ENCODE measurements at regions of chr3 and their contacts with region 1.

Region 1: GRCh38 chr3:43998836-43999727 is 242.6 kb upstream of the TOPAZ1 start:
- DNase-seq: peak; percentile 89 to 90
- H3K4me3 ChIP-seq: peak overlapping the region; percentile 60 to 75 (median 66)
- H3K27ac ChIP-seq: peak overlapping the region; percentile 73 to 78 (median 77)
- H3K4me1 ChIP-seq: peaks cover 27 to 55% of the 10 kb centered on the region in 2 donors
- H3K27me3 ChIP-seq: no peaks in the 10 kb centered on the region
- CTCF ChIP-seq: peak in 1 of 6 experiments; percentile 21
- POLR2A ChIP-seq: peak; percentile 14 to 95

Region 2: DNA sequence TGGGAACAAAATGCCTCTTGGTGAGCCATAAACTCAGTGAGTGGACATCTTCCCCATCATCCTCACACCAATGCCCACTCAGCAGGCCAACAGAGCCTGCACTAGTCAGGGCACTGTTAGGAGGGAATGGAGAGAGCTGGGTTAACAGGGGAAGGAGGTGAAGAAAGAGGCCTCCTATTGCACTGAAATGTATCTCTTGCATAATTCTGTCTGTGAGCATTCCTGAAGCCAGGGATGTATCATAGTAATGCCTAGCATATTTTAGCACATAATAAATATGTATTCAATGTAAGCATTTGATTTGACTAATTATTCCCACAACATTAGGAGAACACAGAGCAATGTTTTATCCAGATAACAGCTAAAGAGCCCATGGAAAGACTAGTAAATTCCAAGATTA is 458.5 kb before region 1 on chr3:
- intact Hi-C with region 1: loop called (anchors 10 kb)
- DNase-seq: no peak
- H3K4me3 ChIP-seq: no peak overlapping the region
- H3K27ac ChIP-seq: no peak overlapping the region
- H3K4me1 ChIP-seq: no peaks in the 10 kb centered on the region
- H3K27me3 ChIP-seq: no peaks in the 10 kb centered on the region
- CTCF ChIP-seq: no peak
- POLR2A ChIP-seq: no peak

Region 3: DNA sequence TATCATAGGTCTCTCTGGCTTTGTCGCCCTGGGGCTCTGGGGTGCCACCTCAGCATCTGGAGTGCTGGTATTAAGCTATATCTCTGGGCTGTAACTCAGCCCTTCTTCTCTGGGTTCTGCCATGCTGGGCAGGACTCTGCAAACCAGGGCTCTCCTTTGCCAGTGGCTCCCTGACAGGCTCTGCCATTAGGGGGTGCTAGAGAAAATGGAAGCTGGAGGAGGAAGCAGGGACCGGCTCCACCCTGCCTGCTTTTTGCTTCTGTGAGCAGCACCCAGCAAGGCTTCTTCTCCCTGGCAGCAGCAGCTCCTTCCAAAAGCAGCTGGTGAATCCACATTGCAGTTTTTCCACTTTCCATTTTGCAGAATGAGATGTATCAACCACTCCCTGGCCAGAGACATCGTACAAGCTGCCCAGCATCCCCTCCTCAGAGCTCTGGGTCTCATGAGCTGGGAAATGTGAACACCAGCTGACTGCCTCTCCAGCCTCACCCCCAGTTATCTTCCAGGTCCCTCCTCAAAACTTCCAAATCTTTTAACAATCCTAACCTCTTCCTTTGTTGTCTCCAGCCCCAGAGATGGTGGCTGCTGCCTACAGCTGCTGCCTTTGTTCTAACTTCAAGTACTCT is 143.3 kb before region 1 on chr3:
- intact Hi-C with region 1: loop called (anchors 10 kb)
- DNase-seq: peak; percentile 64 to 74
- H3K4me3 ChIP-seq: no peak overlapping the region
- H3K27ac ChIP-seq: no peak overlapping the region
- H3K4me1 ChIP-seq: peaks cover 0 to 6% of the 10 kb centered on the region in 2 donors
- H3K27me3 ChIP-seq: no peaks in the 10 kb centered on the region
- CTCF ChIP-seq: peak in 5 of 6 experiments; percentile 27 to 68 (median 50)
- POLR2A ChIP-seq: no peak

Region 4: DNA sequence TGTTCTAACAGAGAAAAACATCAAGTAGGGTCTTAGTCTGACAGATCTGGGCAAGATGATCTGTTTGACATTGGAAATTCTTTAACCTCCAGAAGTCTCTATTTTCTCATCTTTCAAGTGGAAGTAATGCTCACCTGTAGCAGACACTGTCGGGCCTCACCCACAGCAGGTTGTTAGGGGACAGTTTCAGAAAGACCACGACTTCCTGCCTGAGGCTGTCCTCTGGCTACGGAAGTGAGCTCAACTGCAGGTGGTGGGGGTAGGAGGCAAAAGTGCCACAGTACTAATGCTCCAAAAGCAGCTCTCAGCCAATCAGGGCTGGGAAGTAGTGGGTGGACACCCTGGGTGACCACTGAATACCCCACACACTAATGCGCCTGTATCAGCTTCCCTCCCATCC is 131.2 kb after region 1 on chr3:
- intact Hi-C with region 1: loop called (anchors 5 kb)
- DNase-seq: no peak
- H3K4me3 ChIP-seq: no peak overlapping the region
- H3K27ac ChIP-seq: no peak overlapping the region
- H3K4me1 ChIP-seq: peaks cover 8 to 30% of the 10 kb centered on the region in 2 donors
- H3K27me3 ChIP-seq: no peaks in the 10 kb centered on the region
- CTCF ChIP-seq: no peak
- POLR2A ChIP-seq: no peak

Region 5: GRCh38 chr3:44198284-44199269 is 199.5 kb after region 1 on chr3:
- intact Hi-C with region 1: loop called (anchors 5 kb)
- DNase-seq: peak; percentile 80 to 87
- H3K4me3 ChIP-seq: no peak overlapping the region
- H3K27ac ChIP-seq: no peak overlapping the region
- H3K4me1 ChIP-seq: no peaks in the 10 kb centered on the region
- H3K27me3 ChIP-seq: no peaks in the 10 kb centered on the region
- CTCF ChIP-seq: peak; percentile 43 to 92 (median 80)
- POLR2A ChIP-seq: no peak

Measured in thyroid gland (tissue), 4 donors.